Activated naive CD4-positive, alpha-beta T cell treated with anti-CD3 and anti-CD28 coated beads for 36 hours (primary cell): ENCODE measurements at regions of chr18 and their contacts with region 1.

Region 1: DNA sequence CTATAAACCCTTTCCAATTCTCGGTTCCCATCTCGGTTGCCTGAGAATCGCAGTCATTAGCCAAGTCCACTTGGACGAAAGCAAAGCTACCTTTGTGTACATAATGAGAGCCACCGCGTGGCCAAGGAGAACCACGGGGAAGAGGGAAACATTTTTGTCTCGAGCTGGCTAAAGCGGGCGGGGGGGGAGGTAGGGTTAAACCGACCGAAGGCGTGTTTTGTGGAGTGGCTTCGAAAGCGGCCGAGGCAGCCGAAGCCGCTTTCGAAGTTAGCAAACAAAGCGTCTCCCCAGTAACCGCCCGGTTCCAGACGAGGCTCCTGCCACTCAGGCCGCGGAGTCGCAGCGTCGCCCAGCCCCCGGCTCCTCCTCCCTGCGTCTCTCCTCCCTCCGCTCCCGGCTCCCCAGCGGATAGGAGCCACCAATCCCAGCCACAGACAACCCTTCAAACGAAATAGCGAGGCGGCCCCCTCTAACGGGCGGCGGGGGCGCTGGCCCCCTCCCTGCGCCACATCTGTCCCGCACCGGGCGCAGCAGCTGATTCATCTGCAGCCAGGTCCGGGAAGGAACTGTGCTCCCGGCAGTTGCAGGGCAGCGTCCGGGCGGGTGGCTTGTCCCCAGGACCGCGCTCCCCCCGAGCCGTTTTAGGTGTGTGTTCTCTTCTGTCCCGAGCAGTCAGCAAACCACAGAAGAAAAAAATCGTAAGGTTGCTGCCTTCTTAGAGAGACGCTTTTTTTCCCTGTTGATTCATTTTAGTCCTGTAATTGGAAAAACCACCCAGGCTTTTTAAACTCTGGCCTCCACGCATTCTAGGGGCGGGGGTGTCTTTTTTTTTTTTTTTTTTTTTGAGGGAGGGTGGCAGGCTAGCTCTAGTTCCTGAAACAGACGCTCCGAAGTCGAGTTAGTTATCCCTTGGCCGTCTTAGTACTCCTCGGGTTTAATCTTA is 1.8 kb upstream of the TGIF1 start:
- DNase-seq: peak; percentile 90
- H3K4me3 Mint-ChIP-seq: peak overlapping the region; percentile 89
- H3K27ac Mint-ChIP-seq: peak overlapping the region; percentile 98
- H3K4me1 Mint-ChIP-seq: peaks cover 30% of the 10 kb centered on the region
- H3K27me3 Mint-ChIP-seq: no peaks in the 10 kb centered on the region

Region 2: DNA sequence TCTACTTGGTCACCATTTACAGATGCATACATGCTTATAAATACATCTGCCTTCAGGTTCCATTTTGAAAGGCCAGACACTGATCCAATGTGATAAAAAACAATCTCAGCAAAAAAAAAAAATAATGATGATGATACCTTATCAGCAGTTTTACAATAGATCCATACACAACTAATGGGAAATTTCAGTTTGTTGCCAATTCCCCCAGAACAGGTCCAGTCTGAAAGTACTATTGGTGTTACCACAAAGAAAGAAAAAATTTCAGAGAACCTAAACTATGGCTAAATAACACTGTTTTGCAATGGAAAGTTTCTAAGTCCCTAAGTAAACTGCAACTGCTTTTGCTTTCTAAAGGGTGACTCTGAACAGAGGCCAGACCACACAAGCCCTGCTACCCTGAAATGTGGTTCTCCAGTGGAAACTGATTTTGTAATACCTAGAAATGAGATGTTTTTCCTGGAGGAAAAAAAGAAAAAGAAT is 489.3 kb before region 1 on chr18:
- CTCF ChIA-PET with region 1: no interaction called
- intact Hi-C with region 1: loop called (anchors 2 kb)
- DNase-seq: peak; percentile 44
- H3K4me3 Mint-ChIP-seq: peak overlapping the region; percentile 53
- H3K27ac Mint-ChIP-seq: peak overlapping the region; percentile 100
- H3K4me1 Mint-ChIP-seq: peaks cover 88% of the 10 kb centered on the region
- H3K27me3 Mint-ChIP-seq: no peaks in the 10 kb centered on the region

Region 3: GRCh38 chr18:3261371-3262246 is 186.6 kb before region 1 on chr18 and contains the start of gene MYL12B:
- CTCF ChIA-PET with region 1: interaction called, 3 read pairs
- intact Hi-C with region 1: loop called (anchors 1 kb)
- DNase-seq: peak; percentile 79
- H3K4me3 Mint-ChIP-seq: peak within 1 kb of the TSS; percentile 92
- H3K27ac Mint-ChIP-seq: peak within 1 kb of the TSS; percentile 97
- H3K4me1 Mint-ChIP-seq: peaks cover 64% of the 10 kb centered on the region
- H3K27me3 Mint-ChIP-seq: no peaks in the 10 kb centered on the region
- total RNA-seq, gene MYL12B: 288 to 293 TPM

Region 4: DNA sequence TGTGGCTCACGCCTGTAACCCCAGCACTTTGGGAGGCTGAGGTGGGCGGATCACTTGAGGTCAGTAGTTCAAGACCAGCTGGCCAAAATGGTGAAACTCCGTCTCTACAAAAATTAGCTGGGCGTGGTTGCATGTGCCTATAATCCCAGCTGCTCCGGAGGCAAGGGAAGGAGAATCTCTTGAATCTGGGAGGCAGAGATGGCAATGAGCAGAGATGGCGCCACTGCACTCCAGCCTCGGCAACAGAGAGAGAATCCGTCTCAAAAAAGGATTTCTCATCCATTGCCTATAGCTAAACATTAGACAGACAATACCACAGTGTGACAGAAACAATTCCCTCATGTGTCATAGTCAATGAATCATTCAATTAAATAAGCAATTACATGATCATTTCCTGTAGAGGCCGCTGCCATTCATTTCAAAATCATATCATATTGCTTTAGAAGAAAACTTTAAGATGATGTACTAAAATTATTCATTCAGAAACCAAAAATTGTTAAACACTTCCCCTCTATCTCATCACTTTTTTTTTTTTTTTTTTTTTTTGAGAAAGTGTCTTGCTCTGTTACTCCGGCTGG is 67.7 kb before region 1 on chr18:
- CTCF ChIA-PET with region 1: interaction called, 3 read pairs
- intact Hi-C with region 1: loop called (anchors 1 kb)
- DNase-seq: peak; percentile 37
- H3K4me3 Mint-ChIP-seq: no peak overlapping the region
- H3K27ac Mint-ChIP-seq: no peak overlapping the region
- H3K4me1 Mint-ChIP-seq: peaks cover 7% of the 10 kb centered on the region
- H3K27me3 Mint-ChIP-seq: no peaks in the 10 kb centered on the region

Region 5: GRCh38 chr18:3418083-3418482 is 30.1 kb before region 1 on chr18:
- CTCF ChIA-PET with region 1: no interaction called
- intact Hi-C with region 1: no loop called
- DNase-seq: no peak
- H3K4me3 Mint-ChIP-seq: no peak overlapping the region
- H3K27ac Mint-ChIP-seq: no peak overlapping the region
- H3K4me1 Mint-ChIP-seq: no peaks in the 10 kb centered on the region
- H3K27me3 Mint-ChIP-seq: no peaks in the 10 kb centered on the region

Region 6: GRCh38 chr18:3604498-3605408 is 156.6 kb after region 1 on chr18:
- CTCF ChIA-PET with region 1: interaction called, 8 read pairs
- intact Hi-C with region 1: loop called (anchors 1 kb)
- DNase-seq: peak; percentile 60
- H3K4me3 Mint-ChIP-seq: no peak overlapping the region
- H3K27ac Mint-ChIP-seq: no peak overlapping the region
- H3K4me1 Mint-ChIP-seq: peaks cover 13% of the 10 kb centered on the region
- H3K27me3 Mint-ChIP-seq: no peaks in the 10 kb centered on the region

Region 7: DNA sequence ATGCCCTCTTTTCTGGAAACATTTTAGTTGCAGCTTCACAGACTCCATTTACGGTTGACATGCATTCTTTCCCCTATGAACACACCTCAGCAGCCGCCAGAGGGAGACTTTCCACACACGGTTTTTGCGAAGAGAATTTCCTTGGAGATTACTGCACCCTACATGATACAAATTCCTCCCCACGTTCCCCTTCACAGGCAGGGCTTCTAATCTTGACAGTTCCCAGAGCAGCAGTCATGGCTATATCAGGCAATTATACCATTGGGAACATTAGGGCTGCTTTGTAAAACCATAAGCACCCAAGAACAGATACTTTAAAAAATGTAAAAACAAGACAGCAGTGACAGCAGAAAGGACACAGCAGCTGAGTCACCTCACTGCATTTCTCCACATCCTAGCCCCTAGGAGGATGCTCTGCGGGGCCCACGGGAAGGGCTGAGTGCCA is 255.6 kb after region 1 on chr18:
- CTCF ChIA-PET with region 1: no interaction called
- intact Hi-C with region 1: no loop called
- DNase-seq: peak; percentile 57
- H3K4me3 Mint-ChIP-seq: no peak overlapping the region
- H3K27ac Mint-ChIP-seq: no peak overlapping the region
- H3K4me1 Mint-ChIP-seq: peaks cover 3% of the 10 kb centered on the region
- H3K27me3 Mint-ChIP-seq: peaks cover 32% of the 10 kb centered on the region

Region 8: GRCh38 chr18:5295981-5296705 is 1848.0 kb after region 1 on chr18:
- CTCF ChIA-PET with region 1: no interaction called
- intact Hi-C with region 1: loop called (anchors 1 kb)
- DNase-seq: peak; percentile 93
- H3K4me3 Mint-ChIP-seq: peak overlapping the region; percentile 93
- H3K27ac Mint-ChIP-seq: peak overlapping the region; percentile 94
- H3K4me1 Mint-ChIP-seq: peaks cover 22% of the 10 kb centered on the region
- H3K27me3 Mint-ChIP-seq: no peaks in the 10 kb centered on the region